Gastrocnemius medialis (tissue), 4 donors: ENCODE measurements at regions of chr12 and their contacts with region 1.

Region 1: DNA sequence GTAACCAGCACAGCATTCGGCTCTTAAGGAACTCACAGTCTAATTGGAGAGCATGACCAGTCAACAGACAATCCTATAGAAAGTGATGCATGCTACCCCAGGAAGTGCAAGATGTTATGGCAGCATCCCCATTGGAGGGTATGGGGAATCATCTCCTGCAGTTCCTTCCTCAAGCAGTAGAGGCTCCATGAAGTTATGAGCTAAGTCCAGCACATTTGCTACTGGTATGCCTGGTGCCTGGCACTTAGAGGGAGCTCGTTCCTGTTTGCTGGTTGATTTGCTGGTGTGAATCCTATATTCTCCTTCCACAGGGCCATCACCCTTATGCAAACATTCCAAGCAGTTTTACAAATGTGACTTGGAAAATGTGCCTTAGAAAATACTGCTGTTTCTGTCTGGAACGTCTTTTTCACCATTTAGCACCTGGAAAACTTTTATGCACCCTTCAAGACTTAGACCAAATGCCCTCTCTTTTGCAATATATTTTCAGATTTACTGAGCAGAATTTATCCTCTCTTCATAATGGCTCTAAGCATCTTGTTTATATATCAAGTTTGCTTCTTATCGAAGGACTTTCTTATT is 136.1 kb upstream of the WSCD2 start:
- DNase-seq: no peak
- ATAC-seq: no peak
- H3K4me3 ChIP-seq: no peak overlapping the region
- H3K27ac ChIP-seq: no peak overlapping the region
- H3K4me1 ChIP-seq: no peaks in the 10 kb centered on the region
- H3K27me3 ChIP-seq: no peaks in the 10 kb centered on the region
- CTCF ChIP-seq: no peak
- POLR2A ChIP-seq: no peak

Region 2: DNA sequence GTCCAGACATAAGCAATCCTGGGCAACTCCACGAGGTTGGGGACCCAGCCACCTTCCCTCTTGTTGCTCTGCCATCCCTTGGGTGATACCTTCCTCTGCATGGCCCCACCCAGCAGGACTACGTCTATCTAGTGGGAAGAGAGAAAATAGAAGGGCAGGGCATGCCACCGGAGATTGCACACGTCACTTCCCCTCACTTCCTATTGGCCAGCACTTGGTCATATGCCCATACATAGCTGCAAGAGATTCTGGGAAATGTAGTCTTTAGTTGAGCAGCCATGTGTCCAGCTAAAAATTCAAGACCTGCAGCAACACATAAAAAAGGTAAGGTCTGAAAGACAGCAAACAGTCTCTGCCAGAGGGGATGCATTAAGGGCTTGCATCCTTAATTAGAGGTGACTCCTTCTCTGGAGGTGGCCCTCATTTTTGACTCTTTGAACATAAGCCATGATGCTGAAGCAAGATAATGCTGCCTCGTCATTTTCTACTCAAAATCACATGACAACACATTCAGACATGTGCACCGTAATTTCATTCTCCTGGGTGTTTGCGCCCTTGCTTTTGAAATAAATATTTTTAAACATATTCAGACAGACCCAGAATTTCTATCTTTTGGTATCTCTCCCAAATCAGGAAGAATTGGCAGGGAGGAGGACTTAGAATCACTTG is 399.1 kb before region 1 on chr12:
- in situ Hi-C with region 1: no loop called
- intact Hi-C with region 1: no loop called
- DNase-seq: no peak
- ATAC-seq: no peak
- H3K4me3 ChIP-seq: no peak overlapping the region
- H3K27ac ChIP-seq: no peak overlapping the region
- H3K4me1 ChIP-seq: no peaks in the 10 kb centered on the region
- H3K27me3 ChIP-seq: no peaks in the 10 kb centered on the region
- CTCF ChIP-seq: no peak
- POLR2A ChIP-seq: no peak

Region 3: GRCh38 chr12:107929436-107929835 is 63.5 kb before region 1 on chr12:
- in situ Hi-C with region 1: no loop called
- intact Hi-C with region 1: no loop called
- DNase-seq: no peak
- ATAC-seq: no peak
- H3K4me3 ChIP-seq: no peak overlapping the region
- H3K27ac ChIP-seq: no peak overlapping the region
- H3K4me1 ChIP-seq: no peaks in the 10 kb centered on the region
- H3K27me3 ChIP-seq: peaks cover 0 to 10% (median 0%) of the 10 kb centered on the region in 3 donors
- CTCF ChIP-seq: no peak
- POLR2A ChIP-seq: no peak

Region 4: GRCh38 chr12:108193917-108194316 is 201.0 kb after region 1 on chr12:
- in situ Hi-C with region 1: no loop called
- intact Hi-C with region 1: loop called (anchors 5 kb)
- DNase-seq: no peak
- ATAC-seq: no peak
- H3K4me3 ChIP-seq: no peak overlapping the region
- H3K27ac ChIP-seq: no peak overlapping the region
- H3K4me1 ChIP-seq: no peaks in the 10 kb centered on the region
- H3K27me3 ChIP-seq: no peaks in the 10 kb centered on the region
- CTCF ChIP-seq: peak in 4 of 5 experiments; percentile 45 to 65 (median 50)
- POLR2A ChIP-seq: no peak